H1 (cell line): ENCODE measurements at regions of chr11 and their contacts with region 1.

Region 1: GRCh38 chr11:87421422-87421821 is 383.7 kb downstream of the TMEM135 start:
- DNase-seq: peak; percentile 44 to 60
- H3K4me3 ChIP-seq: no peak overlapping the region
- H3K27ac ChIP-seq: no peak overlapping the region
- H3K4me1 ChIP-seq: no peaks in the 10 kb centered on the region
- H3K27me3 ChIP-seq: no peaks in the 10 kb centered on the region
- CTCF ChIP-seq: peak; percentile 15 to 86 (median 54)
- EP300 ChIP-seq: no peak
- POLR2A ChIP-seq: no peak
- RAD21 ChIP-seq: peak; percentile 86 to 87

Region 2: DNA sequence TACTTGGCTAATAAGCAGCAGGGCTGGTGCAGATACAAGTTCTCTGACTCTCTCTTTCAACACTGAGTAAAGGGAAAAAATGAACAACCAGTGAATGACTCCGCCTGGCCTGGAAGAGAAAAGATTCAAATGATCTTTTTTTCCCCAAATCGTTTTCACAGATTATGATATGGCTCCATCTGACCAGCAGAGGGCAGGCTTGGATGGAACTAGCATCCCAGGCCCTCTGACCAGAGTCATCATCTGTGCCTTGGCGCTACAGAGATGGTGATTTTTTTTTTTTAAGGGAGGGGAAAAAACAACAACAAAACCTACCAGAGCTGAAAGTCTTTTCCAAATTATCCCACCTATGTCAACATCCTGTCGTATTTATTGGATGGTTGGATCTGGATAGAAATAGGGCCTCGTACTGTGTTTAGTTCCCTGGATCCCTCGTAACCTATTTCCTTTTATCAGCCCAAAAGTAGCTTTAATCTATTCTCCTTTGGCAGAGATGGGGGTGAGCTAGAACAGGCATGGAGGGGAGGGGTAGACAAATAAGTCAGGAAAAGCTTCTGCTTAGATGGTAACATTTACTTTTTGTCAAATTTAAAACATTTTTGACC is 551.4 kb before region 1 on chr11:
- CTCF ChIA-PET with region 1: interaction called, 10 read pairs
- POLR2A ChIA-PET with region 1: no interaction called
- DNase-seq: peak; percentile 10 to 74
- H3K4me3 ChIP-seq: no peak overlapping the region
- H3K27ac ChIP-seq: no peak overlapping the region
- H3K4me1 ChIP-seq: no peaks in the 10 kb centered on the region
- H3K27me3 ChIP-seq: no peaks in the 10 kb centered on the region
- CTCF ChIP-seq: peak; percentile 62 to 87 (median 78)
- EP300 ChIP-seq: no peak
- POLR2A ChIP-seq: no peak
- RAD21 ChIP-seq: peak; percentile 86 to 90

Region 3: DNA sequence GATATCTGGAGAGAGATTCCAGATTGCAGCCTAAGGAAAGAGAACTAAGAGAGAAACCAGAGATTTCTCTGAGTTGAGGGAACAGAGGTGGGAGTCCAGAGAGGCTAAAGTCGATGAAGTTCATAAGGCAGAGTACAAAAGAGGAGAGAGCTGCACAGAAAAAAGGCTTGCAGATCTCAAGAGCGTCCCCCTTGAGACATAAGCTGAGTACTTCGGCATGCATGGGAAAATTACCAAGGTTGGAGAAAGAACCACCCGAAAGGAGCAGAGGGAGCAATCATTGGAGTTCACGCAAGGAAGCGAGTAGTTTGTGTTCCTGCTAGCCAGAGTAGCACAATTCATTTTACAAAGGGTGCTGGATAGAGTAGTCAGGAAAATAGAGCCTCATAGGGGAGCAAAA is 90.1 kb before region 1 on chr11:
- CTCF ChIA-PET with region 1: interaction called, 10 read pairs
- POLR2A ChIA-PET with region 1: no interaction called
- DNase-seq: no peak
- H3K4me3 ChIP-seq: no peak overlapping the region
- H3K27ac ChIP-seq: no peak overlapping the region
- H3K4me1 ChIP-seq: no peaks in the 10 kb centered on the region
- H3K27me3 ChIP-seq: no peaks in the 10 kb centered on the region
- CTCF ChIP-seq: no peak
- EP300 ChIP-seq: no peak
- POLR2A ChIP-seq: no peak
- RAD21 ChIP-seq: no peak

Region 4: GRCh38 chr11:87359401-87359800 is 62.0 kb before region 1 on chr11:
- CTCF ChIA-PET with region 1: interaction called, 192 read pairs
- POLR2A ChIA-PET with region 1: no interaction called
- DNase-seq: no peak
- H3K4me3 ChIP-seq: no peak overlapping the region
- H3K27ac ChIP-seq: no peak overlapping the region
- H3K4me1 ChIP-seq: no peaks in the 10 kb centered on the region
- H3K27me3 ChIP-seq: no peaks in the 10 kb centered on the region
- CTCF ChIP-seq: no peak
- EP300 ChIP-seq: no peak
- POLR2A ChIP-seq: no peak
- RAD21 ChIP-seq: no peak

Region 5: GRCh38 chr11:87405843-87406242 is 15.6 kb before region 1 on chr11:
- CTCF ChIA-PET with region 1: interaction called, 26 read pairs
- POLR2A ChIA-PET with region 1: no interaction called
- DNase-seq: no peak
- H3K4me3 ChIP-seq: no peak overlapping the region
- H3K27ac ChIP-seq: no peak overlapping the region
- H3K4me1 ChIP-seq: no peaks in the 10 kb centered on the region
- H3K27me3 ChIP-seq: no peaks in the 10 kb centered on the region
- CTCF ChIP-seq: no peak
- EP300 ChIP-seq: no peak
- POLR2A ChIP-seq: no peak
- RAD21 ChIP-seq: no peak

Region 6: DNA sequence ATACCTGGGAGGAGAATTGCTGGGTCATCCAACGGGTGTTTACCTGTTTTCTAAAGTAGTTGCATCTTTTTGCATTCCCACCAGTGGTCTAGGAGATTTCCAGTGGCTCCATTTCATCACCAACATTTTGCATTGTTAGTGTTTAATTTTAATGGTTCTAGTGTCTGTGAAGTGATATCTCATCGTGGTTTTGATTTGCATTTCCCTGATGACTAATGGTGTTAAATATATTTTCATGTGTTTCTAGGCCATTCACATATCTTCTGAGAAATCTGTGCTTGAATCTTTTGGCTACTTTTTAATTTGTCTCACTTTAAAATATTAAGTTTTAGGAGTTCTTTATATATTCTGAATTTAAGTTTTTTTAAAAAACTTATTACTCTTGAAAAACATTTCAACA is 55.9 kb after region 1 on chr11:
- CTCF ChIA-PET with region 1: no interaction called
- POLR2A ChIA-PET with region 1: no interaction called
- DNase-seq: no peak
- H3K4me3 ChIP-seq: no peak overlapping the region
- H3K27ac ChIP-seq: no peak overlapping the region
- H3K4me1 ChIP-seq: no peaks in the 10 kb centered on the region
- H3K27me3 ChIP-seq: peaks cover 0 to 1% (median 0%) of the 10 kb centered on the region in 4 experiments; a peak in 1 of 7 replicates
- CTCF ChIP-seq: no peak
- EP300 ChIP-seq: no peak
- POLR2A ChIP-seq: no peak
- RAD21 ChIP-seq: no peak